H1 (cell line): ENCODE measurements at regions of chr16 and their contacts with region 1.

Region 1: GRCh38 chr16:85986931-85987749 is 88.2 kb downstream of the IRF8 start:
- DNase-seq: peak in 1 of 2 experiments; percentile 72
- H3K4me3 ChIP-seq: no peak overlapping the region
- H3K27ac ChIP-seq: no peak overlapping the region
- H3K4me1 ChIP-seq: no peaks in the 10 kb centered on the region; a peak in 1 of 7 replicates
- H3K27me3 ChIP-seq: no peaks in the 10 kb centered on the region
- CTCF ChIP-seq: peak in 2 of 3 experiments; percentile 37 to 50; a peak in 3 of 4 replicates
- EP300 ChIP-seq: no peak
- POLR2A ChIP-seq: no peak
- RAD21 ChIP-seq: peak; percentile 64 to 67

Region 2: DNA sequence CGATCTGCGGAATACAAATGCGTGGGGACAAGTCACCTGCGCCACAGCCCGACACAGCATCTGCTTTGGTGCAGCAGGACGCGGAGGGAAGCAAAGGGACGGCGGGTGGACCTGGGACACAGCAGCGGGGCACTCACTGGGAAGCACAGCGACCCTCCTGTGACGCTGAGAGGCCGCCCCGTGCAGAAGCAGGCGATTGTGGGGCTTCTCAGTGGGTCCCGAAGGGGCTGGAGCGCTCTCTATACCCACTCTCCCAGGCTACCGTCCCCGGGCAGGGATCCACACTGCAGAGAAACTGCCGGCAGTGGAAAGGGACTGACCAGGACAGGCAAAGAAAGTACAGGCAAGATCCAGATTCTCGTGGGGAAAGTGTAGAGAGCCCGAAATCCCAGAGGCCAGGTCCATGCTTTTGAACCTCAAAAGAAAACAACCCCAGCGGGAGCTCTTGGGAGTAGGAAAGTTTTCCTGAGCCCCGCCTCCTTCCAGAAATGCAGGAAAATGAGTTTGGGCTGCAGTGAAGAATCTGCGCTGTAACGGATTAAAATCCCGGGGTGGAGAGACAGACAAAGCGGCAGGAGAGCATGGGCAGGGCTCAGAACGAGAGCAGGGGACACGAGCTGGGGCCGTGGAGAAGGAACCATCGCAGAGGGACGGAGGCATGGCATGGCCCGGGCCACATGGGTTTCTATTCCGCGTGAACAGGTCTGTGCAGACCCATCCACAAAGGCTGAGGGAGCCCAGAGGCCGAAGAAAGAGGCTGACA is 174.9 kb before region 1 on chr16:
- CTCF ChIA-PET with region 1: interaction called, 319 read pairs
- POLR2A ChIA-PET with region 1: no interaction called
- DNase-seq: no peak
- H3K4me3 ChIP-seq: no peak overlapping the region
- H3K27ac ChIP-seq: no peak overlapping the region
- H3K4me1 ChIP-seq: peaks cover 0 to 4% (median 0%) of the 10 kb centered on the region in 4 experiments; a peak in 2 of 7 replicates
- H3K27me3 ChIP-seq: no peaks in the 10 kb centered on the region
- CTCF ChIP-seq: no peak
- EP300 ChIP-seq: no peak
- POLR2A ChIP-seq: no peak
- RAD21 ChIP-seq: no peak

Region 3: GRCh38 chr16:85928401-85928820 is 58.7 kb before region 1 on chr16:
- CTCF ChIA-PET with region 1: interaction called, 20 read pairs
- POLR2A ChIA-PET with region 1: no interaction called
- DNase-seq: no peak
- H3K4me3 ChIP-seq: no peak overlapping the region
- H3K27ac ChIP-seq: no peak overlapping the region
- H3K4me1 ChIP-seq: no peaks in the 10 kb centered on the region; a peak in 1 of 7 replicates
- H3K27me3 ChIP-seq: 0 out of 7 replicates have a peak, but pooled peaks cover 0 to 2% (median 0%) of the 10 kb centered on the region in 4 experiments
- CTCF ChIP-seq: no peak
- EP300 ChIP-seq: no peak
- POLR2A ChIP-seq: no peak
- RAD21 ChIP-seq: no peak

Region 4: DNA sequence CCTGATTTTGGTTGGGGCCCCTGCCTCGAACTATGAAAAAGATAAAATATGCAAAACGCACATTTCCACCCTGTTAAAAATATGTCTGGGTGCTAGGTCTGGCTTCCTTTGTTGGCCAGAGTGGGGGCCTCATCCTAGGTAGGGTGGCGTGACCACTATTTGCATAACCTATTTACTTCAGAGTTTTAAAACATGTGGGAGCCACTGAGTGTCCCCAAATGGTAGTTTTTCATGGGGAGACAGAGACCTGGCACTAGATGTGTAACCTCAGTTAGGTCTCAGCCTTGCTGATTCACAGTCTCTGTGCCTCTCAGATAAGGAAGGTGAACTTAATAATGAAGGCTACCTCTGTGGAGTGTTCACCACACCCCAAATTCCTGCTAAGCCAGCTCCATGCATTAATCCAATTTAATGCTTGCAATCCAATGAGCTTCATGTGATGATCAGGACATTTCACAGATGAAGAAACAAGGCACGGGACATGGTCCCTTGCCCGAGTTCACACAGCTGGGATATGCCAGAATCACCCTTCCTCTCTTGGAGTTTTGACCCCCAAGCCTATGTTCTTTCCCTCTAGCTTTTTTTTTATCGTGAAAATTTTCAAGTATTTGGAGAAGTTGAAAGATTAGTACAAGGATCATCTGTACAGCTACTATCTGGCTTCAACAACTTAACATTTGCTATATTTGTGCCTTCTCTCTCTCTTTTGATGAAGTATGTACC is 15.2 kb after region 1 on chr16:
- CTCF ChIA-PET with region 1: interaction called, 14 read pairs
- POLR2A ChIA-PET with region 1: interaction called, 3 read pairs
- DNase-seq: no peak
- H3K4me3 ChIP-seq: no peak overlapping the region
- H3K27ac ChIP-seq: no peak overlapping the region
- H3K4me1 ChIP-seq: no peaks in the 10 kb centered on the region
- H3K27me3 ChIP-seq: no peaks in the 10 kb centered on the region
- CTCF ChIP-seq: no peak
- EP300 ChIP-seq: no peak
- POLR2A ChIP-seq: no peak
- RAD21 ChIP-seq: no peak

Region 5: GRCh38 chr16:86059253-86060171 is 72.4 kb after region 1 on chr16:
- CTCF ChIA-PET with region 1: no interaction called
- POLR2A ChIA-PET with region 1: no interaction called
- DNase-seq: no peak
- H3K4me3 ChIP-seq: no peak overlapping the region
- H3K27ac ChIP-seq: no peak overlapping the region
- H3K4me1 ChIP-seq: no peaks in the 10 kb centered on the region
- H3K27me3 ChIP-seq: peaks cover 0 to 3% (median 0%) of the 10 kb centered on the region in 4 experiments; a peak in 1 of 7 replicates
- CTCF ChIP-seq: no peak
- EP300 ChIP-seq: no peak
- POLR2A ChIP-seq: no peak
- RAD21 ChIP-seq: no peak

Region 6: GRCh38 chr16:86457501-86458148 is 470.5 kb after region 1 on chr16:
- CTCF ChIA-PET with region 1: no interaction called
- POLR2A ChIA-PET with region 1: no interaction called
- DNase-seq: no peak
- H3K4me3 ChIP-seq: no peak overlapping the region
- H3K27ac ChIP-seq: no peak overlapping the region
- H3K4me1 ChIP-seq: no peaks in the 10 kb centered on the region
- H3K27me3 ChIP-seq: no peaks in the 10 kb centered on the region; a peak in 1 of 7 replicates
- CTCF ChIP-seq: no peak
- EP300 ChIP-seq: no peak
- POLR2A ChIP-seq: no peak
- RAD21 ChIP-seq: no peak

Region 7: GRCh38 chr16:86498661-86499439 is 511.7 kb after region 1 on chr16:
- CTCF ChIA-PET with region 1: no interaction called
- POLR2A ChIA-PET with region 1: no interaction called
- DNase-seq: no peak
- H3K4me3 ChIP-seq: peak overlapping the region in 1 of 4 experiments; percentile 37; a peak in 2 of 8 replicates
- H3K27ac ChIP-seq: no peak overlapping the region
- H3K4me1 ChIP-seq: peaks cover 4 to 28% (median 17%) of the 10 kb centered on the region in 4 experiments
- H3K27me3 ChIP-seq: peaks cover 98 to 100% (median 99%) of the 10 kb centered on the region in 4 experiments
- CTCF ChIP-seq: no peak
- EP300 ChIP-seq: no peak
- POLR2A ChIP-seq: no peak
- RAD21 ChIP-seq: no peak